AG04449 (cell line): ENCODE measurements at regions of chr3 and their contacts with region 1.

Region 1: GRCh38 chr3:155382396-155383042 is 89.0 kb upstream of the STRIT1 start:
- DNase-seq: no peak
- H3K4me3 ChIP-seq: no peak overlapping the region
- CTCF ChIP-seq: peak; percentile 90

Region 2: DNA sequence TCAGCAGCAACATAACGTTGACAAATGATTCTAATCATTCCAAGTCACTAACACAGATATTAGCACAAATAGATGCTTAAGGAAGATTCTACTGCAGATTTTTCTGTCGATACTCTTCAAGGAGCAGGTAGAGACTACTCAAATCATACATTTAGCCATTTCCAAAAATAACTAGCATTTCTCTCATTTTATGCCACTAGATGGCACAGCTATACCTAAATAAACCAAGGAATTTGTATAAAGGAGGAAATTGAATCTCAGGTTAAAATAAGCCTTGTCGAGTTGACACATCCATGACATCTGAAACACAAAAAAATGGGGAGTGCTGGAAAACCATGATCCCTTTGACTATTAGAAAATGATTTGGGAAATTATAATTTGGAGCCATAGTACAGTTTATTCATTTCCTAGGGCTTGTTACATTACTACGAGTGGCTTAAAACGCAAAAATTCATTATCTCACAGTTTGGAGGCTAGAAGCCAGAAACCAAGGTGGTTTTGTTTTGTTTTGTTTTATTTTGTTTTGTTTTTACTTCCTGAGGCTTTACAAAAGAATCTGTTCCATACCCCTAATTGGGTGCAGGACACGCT is 29.5 kb before region 1 on chr3:
- CTCF ChIA-PET with region 1: interaction called, 39 read pairs
- POLR2A ChIA-PET with region 1: no interaction called
- DNase-seq: no peak
- H3K4me3 ChIP-seq: no peak overlapping the region
- CTCF ChIP-seq: peak; percentile 30

Region 3: DNA sequence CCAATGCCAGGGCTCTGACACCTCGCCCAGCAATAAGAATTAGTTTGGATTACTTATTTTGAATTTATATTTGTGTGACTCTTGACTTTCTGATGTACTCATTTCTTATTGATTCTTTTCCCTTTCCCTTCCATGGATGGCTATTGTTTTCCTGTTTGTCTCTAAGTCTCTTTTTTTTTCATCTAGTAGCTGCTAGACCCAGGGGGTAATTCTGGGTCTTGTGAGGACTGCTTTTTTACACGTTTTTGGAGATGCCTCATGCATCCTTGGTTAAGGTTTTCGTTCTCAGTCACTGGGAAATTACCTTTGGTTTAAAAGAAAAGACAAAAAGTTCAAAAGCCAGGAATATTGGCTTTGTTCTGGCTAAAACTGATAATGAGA is 18.8 kb before region 1 on chr3:
- CTCF ChIA-PET with region 1: interaction called, 12 read pairs
- POLR2A ChIA-PET with region 1: no interaction called
- DNase-seq: no peak
- H3K4me3 ChIP-seq: no peak overlapping the region
- CTCF ChIP-seq: no peak

Region 4: GRCh38 chr3:155372281-155372680 is 10.2 kb before region 1 on chr3:
- CTCF ChIA-PET with region 1: interaction called, 10 read pairs
- POLR2A ChIA-PET with region 1: no interaction called
- DNase-seq: no peak
- H3K4me3 ChIP-seq: no peak overlapping the region
- CTCF ChIP-seq: no peak

Region 5: DNA sequence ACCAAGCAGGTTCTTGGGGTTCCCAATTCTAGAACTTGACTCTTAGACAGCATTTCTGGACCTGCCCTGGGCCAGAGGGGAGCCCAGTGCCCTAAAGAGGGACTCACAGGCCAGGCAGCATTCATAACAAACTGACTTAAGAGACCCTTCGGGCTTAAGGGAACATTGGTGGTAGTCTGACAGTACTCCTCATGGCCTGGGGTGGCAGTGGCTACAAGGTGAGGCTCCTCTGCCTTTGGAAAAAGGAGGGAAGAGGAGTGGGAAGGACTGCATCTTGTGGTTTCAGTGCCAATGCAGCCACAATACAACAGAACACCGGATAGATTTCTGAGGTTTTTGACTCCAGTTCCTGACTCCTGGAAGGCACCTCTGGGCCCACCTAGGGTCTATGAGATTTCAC is 83.1 kb after region 1 on chr3:
- CTCF ChIA-PET with region 1: no interaction called
- POLR2A ChIA-PET with region 1: no interaction called
- DNase-seq: no peak
- H3K4me3 ChIP-seq: no peak overlapping the region
- CTCF ChIP-seq: no peak

Region 6: GRCh38 chr3:155690921-155691320 is 308.4 kb after region 1 on chr3:
- CTCF ChIA-PET with region 1: interaction called, 14 read pairs
- POLR2A ChIA-PET with region 1: no interaction called
- DNase-seq: no peak
- H3K4me3 ChIP-seq: no peak overlapping the region
- CTCF ChIP-seq: no peak

Region 7: DNA sequence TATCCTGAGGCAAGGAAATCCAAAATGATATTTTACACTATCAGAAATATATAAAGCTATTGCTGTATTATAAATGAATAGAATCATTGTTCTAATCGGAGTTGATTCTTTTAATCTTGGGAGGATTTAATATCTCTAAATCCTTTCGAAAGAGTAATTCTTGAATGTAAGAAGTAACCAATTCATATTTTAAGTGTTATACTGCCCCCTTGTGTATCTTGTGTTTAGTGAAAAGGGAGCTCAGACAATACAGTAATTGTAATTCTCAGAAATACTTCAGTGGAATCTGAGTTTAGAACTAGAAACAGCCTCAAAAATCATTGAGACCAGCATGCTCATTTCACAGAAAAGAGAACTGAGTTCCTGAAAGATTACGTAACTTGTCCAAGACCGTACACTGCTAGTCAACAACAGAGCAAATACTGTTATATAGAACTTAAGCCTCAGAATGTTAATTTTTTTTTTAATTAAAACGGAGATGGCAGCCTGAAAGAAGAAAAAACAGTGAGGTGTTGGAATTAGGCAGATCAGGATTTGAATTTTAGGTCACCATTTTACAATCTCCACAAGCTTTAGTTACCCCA is 319.5 kb after region 1 on chr3:
- CTCF ChIA-PET with region 1: interaction called, 298 read pairs
- POLR2A ChIA-PET with region 1: no interaction called
- DNase-seq: peak; percentile 3
- H3K4me3 ChIP-seq: no peak overlapping the region
- CTCF ChIP-seq: peak; percentile 25

Region 8: GRCh38 chr3:155712008-155712407 is 329.5 kb after region 1 on chr3:
- CTCF ChIA-PET with region 1: interaction called, 11 read pairs
- POLR2A ChIA-PET with region 1: no interaction called
- DNase-seq: no peak
- H3K4me3 ChIP-seq: no peak overlapping the region
- CTCF ChIP-seq: no peak